Heart right ventricle (tissue), 16 donors: ENCODE measurements at regions of chr9 and their contacts with region 1.

Region 1: DNA sequence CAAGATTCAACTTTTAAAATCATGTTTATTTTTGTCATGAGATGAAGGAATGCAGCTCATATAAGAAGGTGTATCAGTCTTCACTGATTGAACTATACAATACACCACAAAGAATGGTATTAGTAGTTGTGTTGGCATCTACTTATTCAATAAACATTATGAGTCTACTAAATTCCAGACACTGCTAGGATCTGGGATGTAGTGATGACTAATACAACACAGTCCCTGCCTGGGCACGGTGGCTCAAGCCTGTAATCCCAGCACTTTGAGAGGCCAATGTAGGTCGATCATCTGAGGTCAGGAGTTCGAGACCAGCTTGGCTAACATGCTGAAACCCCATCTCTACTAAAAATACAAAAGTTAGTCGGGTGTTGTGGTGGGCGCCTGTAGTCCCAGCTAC is 171.4 kb upstream of the NFIB start:
- DNase-seq: no peak
- ATAC-seq: no peak
- H3K4me3 ChIP-seq: no peak overlapping the region
- H3K27ac ChIP-seq: no peak overlapping the region
- H3K4me1 ChIP-seq: no peaks in the 10 kb centered on the region
- H3K27me3 ChIP-seq: peaks cover 0 to 5% (median 0%) of the 10 kb centered on the region in 7 donors
- CTCF ChIP-seq: no peak

Region 2: GRCh38 chr9:14924899-14925235 is 439.5 kb after region 1 on chr9:
- intact Hi-C with region 1: no loop called
- DNase-seq: no peak
- ATAC-seq: peak in 2 of 8 donors; percentile 46 to 71
- H3K4me3 ChIP-seq: peak overlapping the region in 4 of 10 donors; percentile 2 to 26 (median 18)
- H3K27ac ChIP-seq: peak overlapping the region in 1 of 10 donors; percentile 28
- H3K4me1 ChIP-seq: no peaks in the 10 kb centered on the region
- H3K27me3 ChIP-seq: no peaks in the 10 kb centered on the region
- CTCF ChIP-seq: no peak

Region 3: DNA sequence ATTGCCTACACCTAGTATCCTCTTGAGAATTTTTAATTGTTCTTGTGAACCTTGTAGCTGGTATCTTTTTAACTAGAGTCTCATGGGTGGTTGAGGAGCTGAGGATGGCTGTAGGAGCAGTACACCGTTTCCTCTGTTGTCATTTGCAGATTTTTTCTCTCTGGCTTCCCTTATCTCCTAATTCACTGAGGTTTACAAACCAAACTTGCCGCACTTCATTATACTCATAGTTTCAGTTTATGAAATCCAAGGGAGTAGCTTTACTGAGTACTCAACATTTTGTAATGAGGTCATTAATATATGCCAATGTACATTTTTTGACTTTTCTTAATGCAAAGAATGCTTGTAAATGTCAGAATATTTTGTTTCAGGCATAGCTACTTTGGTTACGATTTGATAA is 1221.6 kb after region 1 on chr9:
- intact Hi-C with region 1: loop called in 1 of 10 experiments (anchors 10 kb)
- DNase-seq: no peak
- ATAC-seq: no peak
- H3K4me3 ChIP-seq: no peak overlapping the region
- H3K27ac ChIP-seq: no peak overlapping the region
- H3K4me1 ChIP-seq: no peaks in the 10 kb centered on the region
- H3K27me3 ChIP-seq: no peaks in the 10 kb centered on the region
- CTCF ChIP-seq: no peak